ENCODE measurements at regions of chr6 and their contacts with region 1.

Region 1: DNA sequence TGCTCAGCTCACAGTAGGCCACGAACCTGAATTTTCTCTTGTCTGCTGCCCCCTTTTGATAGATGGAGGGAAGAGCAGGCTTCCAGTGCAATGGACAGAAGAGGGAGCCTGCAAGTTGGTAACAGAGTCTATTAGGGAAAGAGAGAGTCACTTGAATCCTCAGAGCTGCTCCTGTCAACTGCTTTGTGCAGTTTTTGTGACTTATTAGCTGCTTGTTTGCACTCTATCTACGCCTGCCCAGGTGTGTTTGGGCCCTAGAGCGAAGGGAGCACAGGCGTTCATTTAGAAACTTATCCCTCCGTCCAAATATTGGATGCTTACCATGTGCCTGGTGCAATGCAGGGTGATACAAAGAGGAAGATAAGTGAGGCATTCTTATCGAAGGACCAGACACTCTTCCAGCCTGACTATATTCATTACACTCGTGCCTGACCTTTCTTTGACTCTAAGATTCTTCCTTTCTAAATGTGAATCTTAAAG is 11.6 kb upstream of the SLC2A12 start:
- DNase-seq: peak; percentile 56 to 62 (median 59)
- H3K4me3 ChIP-seq: no peak overlapping the region
- H3K4me3 Mint-ChIP-seq: no peak overlapping the region
- H3K27ac ChIP-seq: no peak overlapping the region
- H3K27ac Mint-ChIP-seq: no peak overlapping the region
- H3K4me1 ChIP-seq: peaks cover 4% of the 10 kb centered on the region
- H3K4me1 Mint-ChIP-seq: peaks cover 0 to 2% (median under 1%) of the 10 kb centered on the region in 4 donors
- H3K27me3 ChIP-seq: no peaks in the 10 kb centered on the region
- H3K27me3 Mint-ChIP-seq: peaks cover 2 to 4% of the 10 kb centered on the region in 2 donors

Region 2: GRCh38 chr6:133710826-133711225 is 353.2 kb before region 1 on chr6:
- CTCF ChIA-PET with region 1: no interaction called
- POLR2A ChIA-PET with region 1: no interaction called
- intact Hi-C with region 1: no loop called
- DNase-seq: no peak
- H3K4me3 ChIP-seq: no peak overlapping the region
- H3K4me3 Mint-ChIP-seq: no peak overlapping the region
- H3K27ac ChIP-seq: no peak overlapping the region
- H3K27ac Mint-ChIP-seq: no peak overlapping the region
- H3K4me1 ChIP-seq: no peaks in the 10 kb centered on the region
- H3K4me1 Mint-ChIP-seq: peaks cover 0 to 5% (median 0%) of the 10 kb centered on the region in 4 donors
- H3K27me3 ChIP-seq: no peaks in the 10 kb centered on the region
- H3K27me3 Mint-ChIP-seq: no peaks in the 10 kb centered on the region

Region 3: GRCh38 chr6:133945158-133945557 is 118.8 kb before region 1 on chr6:
- CTCF ChIA-PET with region 1: interaction called, 10 read pairs
- POLR2A ChIA-PET with region 1: no interaction called
- intact Hi-C with region 1: no loop called
- DNase-seq: no peak
- H3K4me3 ChIP-seq: no peak overlapping the region
- H3K4me3 Mint-ChIP-seq: no peak overlapping the region
- H3K27ac ChIP-seq: no peak overlapping the region
- H3K27ac Mint-ChIP-seq: no peak overlapping the region
- H3K4me1 ChIP-seq: no peaks in the 10 kb centered on the region
- H3K4me1 Mint-ChIP-seq: no peaks in the 10 kb centered on the region
- H3K27me3 ChIP-seq: no peaks in the 10 kb centered on the region
- H3K27me3 Mint-ChIP-seq: peaks cover 6 to 8% of the 10 kb centered on the region in 2 donors

Region 4: GRCh38 chr6:133973109-133973971 is 90.7 kb before region 1 on chr6:
- CTCF ChIA-PET with region 1: interaction called, 97 read pairs
- POLR2A ChIA-PET with region 1: interaction called, 4 read pairs
- intact Hi-C with region 1: loop called (anchors 1 kb)
- DNase-seq: peak in 4 of 5 donors; percentile 38 to 46 (median 42)
- H3K4me3 ChIP-seq: no peak overlapping the region
- H3K4me3 Mint-ChIP-seq: no peak overlapping the region
- H3K27ac ChIP-seq: no peak overlapping the region
- H3K27ac Mint-ChIP-seq: peak overlapping the region in 4 of 7 donors; percentile 11 to 66 (median 18)
- H3K4me1 ChIP-seq: peaks cover 37% of the 10 kb centered on the region
- H3K4me1 Mint-ChIP-seq: peaks cover 31 to 45% (median 38%) of the 10 kb centered on the region in 4 donors
- H3K27me3 ChIP-seq: no peaks in the 10 kb centered on the region
- H3K27me3 Mint-ChIP-seq: no peaks in the 10 kb centered on the region

Region 5: DNA sequence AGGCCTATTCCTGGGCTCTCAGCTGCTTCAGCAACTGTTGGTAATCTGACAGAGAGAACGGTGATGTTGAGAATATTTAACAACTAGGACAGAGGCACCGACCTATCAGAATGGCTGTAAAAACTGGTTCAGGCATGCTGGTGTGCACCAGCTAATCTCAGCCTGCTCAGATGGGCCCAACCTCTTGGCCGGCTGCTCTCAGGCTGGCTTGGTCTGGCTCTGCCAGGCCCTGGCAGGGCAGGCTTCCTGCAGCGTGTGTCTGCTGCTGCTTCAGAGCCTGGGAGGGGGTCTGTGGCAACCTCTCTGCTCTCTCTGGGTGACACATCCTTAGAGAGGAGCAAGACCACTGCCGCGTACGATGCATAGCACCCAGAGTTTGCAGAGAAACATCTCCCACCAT is 16.3 kb before region 1 on chr6:
- CTCF ChIA-PET with region 1: interaction called, 39 read pairs
- POLR2A ChIA-PET with region 1: no interaction called
- intact Hi-C with region 1: no loop called
- DNase-seq: no peak
- H3K4me3 ChIP-seq: no peak overlapping the region
- H3K4me3 Mint-ChIP-seq: no peak overlapping the region
- H3K27ac ChIP-seq: no peak overlapping the region
- H3K27ac Mint-ChIP-seq: no peak overlapping the region
- H3K4me1 ChIP-seq: peaks cover 10% of the 10 kb centered on the region
- H3K4me1 Mint-ChIP-seq: peaks cover 8 to 10% (median 9%) of the 10 kb centered on the region in 4 donors
- H3K27me3 ChIP-seq: no peaks in the 10 kb centered on the region
- H3K27me3 Mint-ChIP-seq: peaks cover 12 to 14% of the 10 kb centered on the region in 2 donors

Region 6: GRCh38 chr6:134097114-134097707 is 33.2 kb after region 1 on chr6:
- CTCF ChIA-PET with region 1: interaction called, 21 read pairs
- POLR2A ChIA-PET with region 1: no interaction called
- intact Hi-C with region 1: loop called (anchors 1 kb)
- DNase-seq: peak; percentile 56 to 60 (median 57)
- H3K4me3 ChIP-seq: no peak overlapping the region
- H3K4me3 Mint-ChIP-seq: no peak overlapping the region
- H3K27ac ChIP-seq: no peak overlapping the region
- H3K27ac Mint-ChIP-seq: no peak overlapping the region
- H3K4me1 ChIP-seq: no peaks in the 10 kb centered on the region
- H3K4me1 Mint-ChIP-seq: no peaks in the 10 kb centered on the region
- H3K27me3 ChIP-seq: no peaks in the 10 kb centered on the region
- H3K27me3 Mint-ChIP-seq: peaks cover 17 to 18% of the 10 kb centered on the region in 2 donors

Region 7: DNA sequence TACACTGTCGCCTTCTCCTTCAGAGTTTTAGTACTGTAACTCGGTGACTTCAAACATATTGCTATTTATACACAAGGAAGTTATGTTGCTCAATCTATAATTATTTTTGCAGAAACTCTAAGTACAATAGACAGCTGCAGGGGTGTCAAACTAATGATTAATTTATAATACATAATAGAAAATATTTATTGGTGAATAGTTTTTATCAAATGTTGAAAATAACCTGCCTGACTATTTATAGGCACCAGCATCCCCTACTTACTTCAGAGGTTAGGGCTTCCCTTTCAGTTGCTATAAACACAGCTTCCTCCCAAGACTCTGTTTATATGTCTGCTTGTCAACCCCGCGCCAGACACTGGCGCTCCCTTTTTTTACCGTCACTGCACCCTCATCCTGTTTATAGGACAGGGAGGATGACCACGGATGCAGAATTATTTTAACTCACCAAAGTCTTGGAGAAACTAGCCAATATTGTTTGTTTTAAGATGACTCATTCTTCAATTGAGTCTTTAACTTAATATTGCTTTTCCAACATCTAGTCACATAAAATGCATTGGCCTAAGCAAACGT is 660.9 kb after region 1 on chr6:
- CTCF ChIA-PET with region 1: no interaction called
- POLR2A ChIA-PET with region 1: no interaction called
- intact Hi-C with region 1: no loop called
- DNase-seq: no peak
- H3K4me3 ChIP-seq: no peak overlapping the region
- H3K4me3 Mint-ChIP-seq: no peak overlapping the region
- H3K27ac ChIP-seq: no peak overlapping the region
- H3K27ac Mint-ChIP-seq: no peak overlapping the region
- H3K4me1 ChIP-seq: no peaks in the 10 kb centered on the region
- H3K4me1 Mint-ChIP-seq: no peaks in the 10 kb centered on the region
- H3K27me3 ChIP-seq: no peaks in the 10 kb centered on the region
- H3K27me3 Mint-ChIP-seq: peaks cover 17% of the 10 kb centered on the region in 2 donors